Left cardiac atrium (tissue), 4 donors: ENCODE measurements at regions of chr3 and their contacts with region 1.

Region 1: DNA sequence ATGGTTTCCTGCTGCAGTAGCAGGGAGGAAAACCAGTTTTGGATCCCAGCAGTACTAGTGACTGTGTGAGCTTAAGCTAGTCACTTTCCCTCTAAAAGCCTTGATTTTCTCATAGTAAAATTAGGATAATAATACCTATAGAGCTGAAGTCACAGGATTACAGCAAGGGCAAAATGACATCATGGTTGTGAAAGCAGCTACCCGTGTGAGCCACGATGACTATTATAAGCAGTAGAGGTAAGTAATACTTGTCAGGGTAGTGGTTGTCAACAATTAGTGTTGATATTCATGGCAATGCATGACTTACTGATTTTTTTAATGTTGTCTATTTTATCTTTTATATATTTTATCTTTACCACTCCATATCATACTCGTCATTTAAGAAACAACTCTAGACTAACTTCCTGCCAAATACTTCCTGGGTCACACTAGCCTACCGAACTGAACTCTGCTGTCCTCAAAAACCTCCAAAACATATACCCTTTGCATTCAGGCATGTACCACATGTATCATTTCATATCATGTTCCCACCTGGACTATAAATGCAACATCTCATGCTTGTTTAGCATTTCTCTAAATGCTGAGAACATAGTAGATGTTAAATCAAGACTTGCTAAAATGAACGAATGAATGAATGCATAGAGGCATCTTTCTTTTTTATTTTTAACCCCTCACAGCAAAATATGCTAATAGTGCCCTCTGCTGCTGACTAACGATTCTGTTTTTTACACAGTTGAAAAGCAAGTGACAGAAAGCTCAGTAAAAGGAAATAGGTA is 172.6 kb downstream of the P3H2 start:
- DNase-seq: no peak
- ATAC-seq: no peak

Region 2: DNA sequence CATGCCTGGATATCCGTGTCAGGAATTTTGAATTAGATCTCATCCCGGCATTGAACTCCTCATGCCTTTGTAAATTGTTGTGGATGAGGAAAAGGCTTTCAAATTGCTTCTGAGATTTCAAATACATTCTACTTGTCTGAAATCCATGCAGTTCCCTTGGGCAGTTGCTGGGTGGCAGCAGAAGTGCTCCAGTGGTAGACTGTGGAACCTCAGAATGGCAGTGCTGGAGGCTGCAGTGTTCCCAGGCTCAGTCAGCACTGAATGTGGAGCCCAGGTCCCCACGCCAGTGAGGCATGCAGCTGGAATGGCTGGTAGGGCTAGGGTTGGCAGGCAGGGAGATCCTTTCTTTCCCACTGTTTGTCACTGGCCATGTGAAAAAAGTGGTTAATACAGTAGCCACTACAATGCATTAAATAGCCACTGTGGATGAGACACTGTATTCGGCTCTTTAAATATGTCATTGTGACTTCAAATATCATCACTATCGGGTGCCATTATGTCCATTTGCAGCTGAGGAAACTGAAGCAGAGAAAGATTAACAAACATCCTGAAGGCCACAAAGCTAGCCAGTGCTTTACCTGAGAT is 677.8 kb before region 1 on chr3:
- intact Hi-C with region 1: loop called (anchors 2 to 5 kb)
- DNase-seq: peak; percentile 30
- ATAC-seq: peak; percentile 71 to 76

Region 3: GRCh38 chr3:189871418-189871817 is 76.7 kb before region 1 on chr3:
- intact Hi-C with region 1: no loop called
- DNase-seq: no peak
- ATAC-seq: no peak